Vagina (tissue), 2 donors: ENCODE measurements at regions of chr2 and their contacts with region 1.

Region 1: GRCh38 chr2:85538486-85539360 is at the start of gene MAT2A:
- DNase-seq: peak in 1 of 2 donors; percentile 94
- H3K4me3 ChIP-seq: peak within 1 kb of the TSS; percentile 88 to 89
- H3K27ac ChIP-seq: peak within 1 kb of the TSS; percentile 99
- H3K4me1 ChIP-seq: peaks cover 48% of the 10 kb centered on the region
- H3K27me3 ChIP-seq: no peaks in the 10 kb centered on the region
- CTCF ChIP-seq: peak; percentile 21 to 61 (median 59)
- POLR2A ChIP-seq: peak in 1 of 2 donors; percentile 100
- total RNA-seq, gene MAT2A: 177 TPM

Region 2: DNA sequence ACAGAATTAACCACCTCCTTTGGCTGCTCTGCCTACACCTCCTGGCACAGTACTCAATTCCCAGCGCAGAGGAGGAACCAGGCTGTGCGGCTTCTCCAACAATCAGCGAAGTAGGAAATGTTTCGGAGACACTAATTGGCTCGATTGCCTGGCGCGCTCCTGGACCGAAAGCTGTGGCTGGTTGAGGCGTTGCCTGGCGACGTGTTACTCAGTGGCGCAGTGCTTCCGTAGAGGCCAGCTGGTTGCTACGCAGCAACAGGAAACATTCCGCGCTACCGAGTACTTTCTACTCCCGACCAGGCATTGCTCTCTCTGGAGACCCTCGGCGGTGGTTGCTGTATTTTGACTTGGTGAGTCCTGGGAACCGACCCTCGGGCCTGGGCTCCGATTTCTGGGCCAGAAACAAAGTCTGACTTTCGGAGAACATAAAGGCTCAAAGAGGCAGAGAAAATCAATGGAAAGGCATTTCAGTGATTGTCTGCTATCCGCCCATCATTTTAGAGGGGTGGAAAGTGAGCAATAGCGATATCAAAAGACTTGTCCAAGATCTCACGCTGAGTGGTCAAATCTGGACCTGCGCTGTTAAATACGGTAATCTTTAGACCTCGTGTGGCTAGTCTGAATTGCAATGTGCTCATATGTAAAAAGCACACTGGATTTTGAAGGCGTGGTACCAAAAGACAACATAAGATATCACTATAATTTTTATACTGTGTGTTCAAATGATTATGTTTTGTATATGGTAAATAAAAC is 1022.3 kb before region 1 on chr2 and contains the start of gene DNAH6:
- intact Hi-C with region 1: no loop called
- DNase-seq: peak in 1 of 2 donors; percentile 96
- H3K4me3 ChIP-seq: peak within 1 kb of the TSS; percentile 42 to 45
- H3K27ac ChIP-seq: no peak within 1 kb of the TSS
- H3K4me1 ChIP-seq: peaks cover 4% of the 10 kb centered on the region
- H3K27me3 ChIP-seq: no peaks in the 10 kb centered on the region
- CTCF ChIP-seq: no peak
- POLR2A ChIP-seq: no peak
- total RNA-seq, gene DNAH6: 0.49 TPM

Region 3: DNA sequence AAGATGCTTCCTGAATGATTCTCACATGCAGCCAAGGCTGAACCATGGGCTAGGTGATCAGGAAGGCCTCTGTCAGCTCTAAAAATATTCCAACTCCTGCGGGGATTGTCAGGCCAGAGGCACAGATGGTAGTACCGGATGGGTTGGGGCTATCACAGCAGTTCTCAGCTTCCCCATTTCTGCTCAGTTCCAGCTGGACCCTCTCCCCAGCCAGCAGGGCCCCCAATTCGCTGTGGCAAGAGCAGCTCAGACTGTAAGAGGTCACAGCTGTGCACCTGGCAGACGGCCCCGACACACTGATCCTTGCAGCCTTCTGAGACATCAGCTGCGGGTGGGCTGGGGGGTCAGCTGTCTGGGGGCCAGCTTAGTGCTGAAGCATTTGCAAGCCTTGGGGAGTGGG is 449.1 kb before region 1 on chr2:
- intact Hi-C with region 1: no loop called
- DNase-seq: no peak
- H3K4me3 ChIP-seq: no peak overlapping the region
- H3K27ac ChIP-seq: no peak overlapping the region
- H3K4me1 ChIP-seq: no peaks in the 10 kb centered on the region
- H3K27me3 ChIP-seq: no peaks in the 10 kb centered on the region
- CTCF ChIP-seq: no peak
- POLR2A ChIP-seq: no peak

Region 4: GRCh38 chr2:85437488-85438284 is 101.0 kb before region 1 on chr2:
- intact Hi-C with region 1: loop called (anchors 1 kb)
- DNase-seq: no peak
- H3K4me3 ChIP-seq: peak overlapping the region; percentile 43 to 54
- H3K27ac ChIP-seq: peak overlapping the region; percentile 90
- H3K4me1 ChIP-seq: peaks cover 56% of the 10 kb centered on the region
- H3K27me3 ChIP-seq: no peaks in the 10 kb centered on the region
- CTCF ChIP-seq: no peak
- POLR2A ChIP-seq: peak in 1 of 2 donors; percentile 92

Region 5: GRCh38 chr2:85602476-85603234 is 63.9 kb after region 1 on chr2 and contains the start of gene TMEM150A:
- intact Hi-C with region 1: loop called (anchors 10 kb)
- DNase-seq: no peak
- H3K4me3 ChIP-seq: peak within 1 kb of the TSS; percentile 70 to 76
- H3K27ac ChIP-seq: peak within 1 kb of the TSS; percentile 90
- H3K4me1 ChIP-seq: peaks cover 61% of the 10 kb centered on the region
- H3K27me3 ChIP-seq: no peaks in the 10 kb centered on the region
- CTCF ChIP-seq: peak in 2 of 3 experiments; percentile 25 to 56
- POLR2A ChIP-seq: peak in 1 of 2 donors; percentile 77
- total RNA-seq, gene TMEM150A: 22.6 TPM